Left ventricle myocardium inferior (tissue), 1 donor: ENCODE measurements at regions of chr1 and their contacts with region 1.

Region 1: DNA sequence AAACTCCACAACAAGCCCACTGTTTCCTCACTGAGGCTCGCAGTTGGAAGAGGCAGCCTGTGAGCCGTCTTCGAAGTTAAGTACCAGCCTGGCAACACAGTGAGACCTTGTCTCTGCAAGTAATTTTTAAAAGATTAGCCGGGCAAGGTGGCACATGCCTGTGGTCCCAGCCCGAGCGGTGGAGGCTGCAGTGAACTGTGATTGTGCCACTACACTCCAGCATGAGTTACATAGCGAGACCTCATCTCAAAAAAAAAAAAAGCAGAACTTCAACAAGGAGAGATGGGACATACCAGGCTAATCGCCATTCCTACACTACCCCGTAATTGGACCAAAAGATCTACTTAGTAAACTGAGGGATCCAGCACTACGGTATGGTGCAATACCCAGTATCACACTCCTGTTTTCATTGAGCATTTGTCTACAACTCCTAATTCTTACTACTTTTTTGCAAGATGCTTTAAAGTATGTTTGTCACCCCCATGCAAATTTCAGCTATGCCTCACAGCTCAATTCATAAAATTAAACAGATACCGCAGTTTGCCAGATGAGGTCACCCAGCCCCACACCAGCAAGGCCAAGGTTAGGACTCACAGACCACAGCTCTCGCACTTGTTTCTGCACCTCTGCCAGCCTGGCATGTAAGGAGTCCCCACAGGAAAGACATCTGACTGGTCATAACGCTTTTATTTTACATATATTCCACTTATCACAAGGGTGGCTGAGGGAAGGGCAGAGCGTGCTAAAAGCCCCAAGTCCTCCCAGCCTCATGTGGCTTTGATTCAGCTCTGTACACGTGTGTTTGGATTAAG is 21.0 kb downstream of the SDE2 start:
- DNase-seq: no peak
- H3K4me3 ChIP-seq: no peak overlapping the region
- H3K27ac ChIP-seq: no peak overlapping the region
- H3K4me1 ChIP-seq: peaks cover 17% of the 10 kb centered on the region
- H3K27me3 ChIP-seq: no peaks in the 10 kb centered on the region
- CTCF ChIP-seq: no peak

Region 2: GRCh38 chr1:225318706-225319575 is 659.2 kb before region 1 on chr1:
- intact Hi-C with region 1: loop called (anchors 10 kb)
- DNase-seq: no peak
- H3K4me3 ChIP-seq: no peak overlapping the region
- H3K27ac ChIP-seq: no peak overlapping the region
- H3K4me1 ChIP-seq: no peaks in the 10 kb centered on the region
- H3K27me3 ChIP-seq: peaks cover 20% of the 10 kb centered on the region
- CTCF ChIP-seq: peak; percentile 76

Region 3: GRCh38 chr1:225474986-225475820 is 502.9 kb before region 1 on chr1:
- intact Hi-C with region 1: loop called (anchors 5 kb)
- DNase-seq: peak; percentile 59
- H3K4me3 ChIP-seq: peak overlapping the region; percentile 39
- H3K27ac ChIP-seq: no peak overlapping the region
- H3K4me1 ChIP-seq: peaks cover 4% of the 10 kb centered on the region
- H3K27me3 ChIP-seq: no peaks in the 10 kb centered on the region
- CTCF ChIP-seq: peak; percentile 100

Region 4: DNA sequence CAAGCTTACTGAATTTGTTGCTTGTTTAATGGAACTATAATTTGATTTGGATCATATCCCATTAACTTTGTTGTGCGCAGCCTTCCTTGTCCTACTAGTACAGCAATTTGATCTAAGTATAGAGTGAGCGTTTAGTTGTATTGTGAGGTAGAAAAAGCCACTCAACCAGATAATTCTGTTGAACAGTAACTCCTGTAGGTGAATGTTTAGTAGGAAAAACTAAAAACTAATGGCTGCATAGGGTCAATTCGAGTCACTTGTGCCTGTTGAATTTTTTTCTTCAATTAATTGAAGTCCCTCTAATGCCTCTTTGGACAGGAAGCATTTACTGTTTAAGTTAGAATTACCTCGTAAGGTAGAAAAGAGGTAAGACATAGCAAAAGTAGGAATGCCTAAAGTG is 183.2 kb before region 1 on chr1:
- intact Hi-C with region 1: loop called (anchors 10 kb)
- DNase-seq: no peak
- H3K4me3 ChIP-seq: no peak overlapping the region
- H3K27ac ChIP-seq: no peak overlapping the region
- H3K4me1 ChIP-seq: no peaks in the 10 kb centered on the region
- H3K27me3 ChIP-seq: no peaks in the 10 kb centered on the region
- CTCF ChIP-seq: no peak